ENCODE measurements at regions of chr1 and their contacts with region 1.

Region 1: DNA sequence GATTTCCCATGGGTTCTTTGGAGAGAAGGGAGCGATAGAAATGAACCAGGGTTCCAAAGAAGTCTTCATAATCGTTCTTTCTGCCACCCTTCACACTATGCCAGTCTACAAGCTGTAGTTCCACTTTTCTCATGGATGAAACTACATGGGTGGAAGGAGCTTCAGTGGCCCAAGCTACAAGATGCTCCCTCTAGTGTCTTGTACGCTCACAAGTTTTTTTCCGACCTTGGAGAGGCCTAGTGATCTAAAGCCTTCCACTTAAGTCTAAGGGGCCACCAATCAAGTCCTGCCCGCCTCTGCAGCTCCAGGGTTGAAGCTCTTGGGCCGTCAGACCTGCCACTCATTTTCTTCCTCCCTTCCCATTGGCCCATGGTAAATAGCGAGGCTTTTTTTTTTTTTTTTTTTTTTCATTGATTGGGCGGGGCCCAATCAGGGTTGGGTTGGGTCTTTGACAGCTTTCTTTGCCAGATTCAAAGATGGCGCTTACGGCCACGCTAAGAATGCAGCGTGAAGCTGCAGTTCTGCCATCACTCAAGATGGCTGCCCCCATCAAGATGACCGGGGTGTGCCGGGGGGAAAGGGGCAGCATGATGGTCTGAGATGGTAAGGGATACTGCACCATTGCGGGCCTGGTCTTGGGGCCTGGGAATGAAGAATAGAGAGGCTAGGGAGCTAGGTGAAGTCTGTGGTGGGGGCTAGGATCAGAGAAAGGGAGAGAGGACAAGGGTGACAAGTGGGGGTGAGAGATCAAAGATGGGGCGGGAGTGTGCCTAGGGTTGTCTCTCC is at the start of gene TOMM40L:
- DNase-seq: peak; percentile 88
- H3K4me3 ChIP-seq: peak within 1 kb of the TSS; percentile 69 to 74
- H3K27ac ChIP-seq: peak within 1 kb of the TSS in 1 of 2 experiments; percentile 67; a peak in 3 of 4 replicates
- H3K4me1 ChIP-seq: peaks cover 8 to 21% of the 10 kb centered on the region in 2 experiments; a peak in 3 of 4 replicates
- H3K27me3 ChIP-seq: no peaks in the 10 kb centered on the region
- CTCF ChIP-seq: peak; percentile 70
- EP300 ChIP-seq: no peak
- RAD21 ChIP-seq: peak; percentile 50
- polyA plus RNA-seq, gene TOMM40L: 9.7 and 11.9 TPM in 2 replicates

Region 2: GRCh38 chr1:161201828-161202725 is 23.6 kb before region 1 on chr1 and contains the start of gene NDUFS2:
- CTCF ChIA-PET with region 1: interaction called, 29 read pairs
- POLR2A ChIA-PET with region 1: interaction called, 19 read pairs
- DNase-seq: peak; percentile 85
- H3K4me3 ChIP-seq: peak within 1 kb of the TSS; percentile 78 to 83
- H3K27ac ChIP-seq: peak within 1 kb of the TSS; percentile 74 to 99
- H3K4me1 ChIP-seq: peaks cover 27 to 56% of the 10 kb centered on the region in 2 experiments
- H3K27me3 ChIP-seq: no peaks in the 10 kb centered on the region
- CTCF ChIP-seq: peak; percentile 49
- EP300 ChIP-seq: no peak
- RAD21 ChIP-seq: no peak
- polyA plus RNA-seq, gene NDUFS2: 203 and 210 TPM in 2 replicates

Region 3: GRCh38 chr1:161238039-161238473 is 12.3 kb after region 1 on chr1 and contains the start of gene NR1I3:
- CTCF ChIA-PET with region 1: interaction called, 29 read pairs
- POLR2A ChIA-PET with region 1: no interaction called
- DNase-seq: no peak
- H3K4me3 ChIP-seq: no peak within 1 kb of the TSS
- H3K27ac ChIP-seq: no peak within 1 kb of the TSS
- H3K4me1 ChIP-seq: no peaks in the 10 kb centered on the region
- H3K27me3 ChIP-seq: no peaks in the 10 kb centered on the region
- CTCF ChIP-seq: no peak
- EP300 ChIP-seq: no peak
- RAD21 ChIP-seq: no peak
- polyA plus RNA-seq, gene NR1I3: not detected in 2 replicates

Region 4: GRCh38 chr1:161292631-161293030 is 66.9 kb after region 1 on chr1:
- CTCF ChIA-PET with region 1: interaction called, 76 read pairs
- POLR2A ChIA-PET with region 1: no interaction called
- DNase-seq: no peak
- H3K4me3 ChIP-seq: no peak overlapping the region
- H3K27ac ChIP-seq: no peak overlapping the region
- H3K4me1 ChIP-seq: no peaks in the 10 kb centered on the region
- H3K27me3 ChIP-seq: no peaks in the 10 kb centered on the region
- CTCF ChIP-seq: no peak
- EP300 ChIP-seq: no peak
- RAD21 ChIP-seq: no peak

Region 5: GRCh38 chr1:161374373-161374772 is 148.6 kb after region 1 on chr1:
- CTCF ChIA-PET with region 1: interaction called, 10 read pairs
- POLR2A ChIA-PET with region 1: no interaction called
- DNase-seq: peak; percentile 28
- H3K4me3 ChIP-seq: no peak overlapping the region
- H3K27ac ChIP-seq: no peak overlapping the region
- H3K4me1 ChIP-seq: no peaks in the 10 kb centered on the region
- H3K27me3 ChIP-seq: no peaks in the 10 kb centered on the region
- CTCF ChIP-seq: peak; percentile 47
- EP300 ChIP-seq: no peak
- RAD21 ChIP-seq: peak; percentile 56

Measured in SK-N-SH (cell line).